Esophagus squamous epithelium (tissue), 5 donors: ENCODE measurements at regions of chr20 and their contacts with region 1.

Region 1: DNA sequence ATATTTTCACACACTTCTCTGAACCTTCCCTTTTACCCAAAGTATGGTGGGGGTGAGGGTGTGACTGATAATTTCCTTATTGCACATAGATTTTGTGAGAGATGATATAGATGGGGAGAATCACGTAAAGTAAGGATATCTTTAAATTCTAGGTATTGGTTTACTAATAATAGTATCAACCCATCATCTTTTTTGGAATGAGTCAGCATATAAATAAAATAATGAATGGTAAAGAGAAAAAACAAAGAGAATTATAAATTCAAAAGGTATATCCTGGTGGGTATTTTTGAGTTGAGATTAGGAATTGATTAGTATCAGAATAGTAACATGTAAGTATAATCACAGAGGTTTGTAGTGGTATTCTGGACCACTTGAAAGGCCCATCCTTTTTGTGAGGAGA is 56.1 kb downstream of the MACROD2 start:
- DNase-seq: no peak
- H3K4me3 ChIP-seq: no peak overlapping the region
- H3K27ac ChIP-seq: no peak overlapping the region
- H3K4me1 ChIP-seq: no peaks in the 10 kb centered on the region
- H3K27me3 ChIP-seq: no peaks in the 10 kb centered on the region
- CTCF ChIP-seq: no peak
- POLR2A ChIP-seq: no peak

Region 2: DNA sequence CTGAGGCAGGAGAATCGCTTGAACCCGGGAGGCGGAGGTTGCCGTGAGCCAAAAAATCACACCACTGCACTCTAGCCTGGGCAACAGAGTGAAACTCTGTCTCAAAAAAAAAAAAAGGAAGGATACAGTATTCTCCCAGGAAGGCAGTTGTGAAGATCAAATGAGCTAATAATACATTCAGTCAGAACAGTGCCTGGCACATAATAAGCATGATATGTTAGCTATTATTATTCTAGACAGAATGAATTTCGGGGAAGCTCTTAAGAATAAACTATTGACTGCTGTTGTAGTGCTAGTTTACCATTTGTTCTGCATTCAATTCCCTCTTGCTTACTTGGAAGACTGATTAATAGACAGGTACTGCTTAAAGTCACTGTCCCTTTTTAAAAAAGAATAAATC is 226.0 kb before region 1 on chr20:
- intact Hi-C with region 1: loop called (anchors 5 kb)
- DNase-seq: no peak
- H3K4me3 ChIP-seq: no peak overlapping the region
- H3K27ac ChIP-seq: no peak overlapping the region
- H3K4me1 ChIP-seq: no peaks in the 10 kb centered on the region
- H3K27me3 ChIP-seq: no peaks in the 10 kb centered on the region
- CTCF ChIP-seq: no peak
- POLR2A ChIP-seq: no peak

Region 3: DNA sequence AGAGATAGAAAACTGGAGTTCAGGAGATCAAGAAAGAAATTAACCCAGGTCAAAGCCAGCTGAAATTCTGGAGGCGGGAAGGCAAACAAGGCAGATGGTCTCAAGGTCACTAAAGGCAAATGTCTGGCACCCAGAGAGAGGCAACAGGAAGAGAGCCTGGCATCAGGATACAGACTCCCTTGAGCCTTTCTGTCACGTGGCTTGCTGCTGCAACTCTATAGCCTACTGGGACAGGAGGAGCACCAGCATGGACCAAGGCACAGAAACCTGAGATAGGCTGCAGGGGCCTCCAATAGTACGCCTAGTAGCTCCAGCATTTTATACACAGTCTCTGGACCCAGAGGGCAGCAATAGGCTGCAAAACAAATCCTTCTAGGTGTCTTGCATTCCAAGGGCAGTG is 136.2 kb before region 1 on chr20:
- intact Hi-C with region 1: no loop called
- DNase-seq: no peak
- H3K4me3 ChIP-seq: no peak overlapping the region
- H3K27ac ChIP-seq: no peak overlapping the region
- H3K4me1 ChIP-seq: no peaks in the 10 kb centered on the region
- H3K27me3 ChIP-seq: no peaks in the 10 kb centered on the region
- CTCF ChIP-seq: no peak
- POLR2A ChIP-seq: no peak